MCF 10A (cell line): ENCODE measurements at regions of chr13 and their contacts with region 1.

Region 1: GRCh38 chr13:38713046-38713445 is 26.2 kb downstream of the FREM2 start:
- DNase-seq: no peak
- H3K4me3 Mint-ChIP-seq: no peak overlapping the region
- H3K27ac Mint-ChIP-seq: no peak overlapping the region
- H3K4me1 Mint-ChIP-seq: no peaks in the 10 kb centered on the region
- H3K27me3 Mint-ChIP-seq: peaks cover 18% of the 10 kb centered on the region
- CTCF ChIP-seq: no peak

Region 2: GRCh38 chr13:38381890-38382289 is 331.2 kb before region 1 on chr13:
- CTCF ChIA-PET with region 1: no interaction called
- POLR2A ChIA-PET with region 1: no interaction called
- intact Hi-C with region 1: no loop called
- DNase-seq: peak; percentile 21
- H3K4me3 Mint-ChIP-seq: no peak overlapping the region
- H3K27ac Mint-ChIP-seq: no peak overlapping the region
- H3K4me1 Mint-ChIP-seq: no peaks in the 10 kb centered on the region
- H3K27me3 Mint-ChIP-seq: no peaks in the 10 kb centered on the region
- CTCF ChIP-seq: no peak

Region 3: DNA sequence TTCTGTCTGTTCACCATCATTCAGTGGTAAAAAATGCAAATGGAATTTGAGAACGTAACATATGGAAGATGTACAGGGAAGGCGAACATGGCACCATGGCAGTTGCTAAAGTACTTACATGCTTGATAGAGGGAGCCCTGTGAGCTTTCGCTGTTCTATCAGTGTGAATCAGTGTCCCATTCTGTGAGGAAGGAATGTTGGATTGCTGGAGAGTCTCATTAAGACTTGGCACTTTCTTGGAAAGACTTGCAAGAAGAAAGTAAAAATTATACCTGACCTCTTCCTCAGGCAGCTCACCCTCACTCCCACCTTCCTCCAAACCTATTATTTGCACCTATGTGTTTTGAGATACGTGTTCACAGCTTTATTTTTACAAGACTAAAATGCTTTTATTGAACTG is 17.3 kb after region 1 on chr13:
- CTCF ChIA-PET with region 1: no interaction called
- POLR2A ChIA-PET with region 1: interaction called, 10 read pairs
- intact Hi-C with region 1: no loop called
- DNase-seq: no peak
- H3K4me3 Mint-ChIP-seq: no peak overlapping the region
- H3K27ac Mint-ChIP-seq: no peak overlapping the region
- H3K4me1 Mint-ChIP-seq: no peaks in the 10 kb centered on the region
- H3K27me3 Mint-ChIP-seq: peaks cover 38% of the 10 kb centered on the region
- CTCF ChIP-seq: no peak